ENCODE measurements at regions of chr11 and their contacts with region 1.

Region 1: DNA sequence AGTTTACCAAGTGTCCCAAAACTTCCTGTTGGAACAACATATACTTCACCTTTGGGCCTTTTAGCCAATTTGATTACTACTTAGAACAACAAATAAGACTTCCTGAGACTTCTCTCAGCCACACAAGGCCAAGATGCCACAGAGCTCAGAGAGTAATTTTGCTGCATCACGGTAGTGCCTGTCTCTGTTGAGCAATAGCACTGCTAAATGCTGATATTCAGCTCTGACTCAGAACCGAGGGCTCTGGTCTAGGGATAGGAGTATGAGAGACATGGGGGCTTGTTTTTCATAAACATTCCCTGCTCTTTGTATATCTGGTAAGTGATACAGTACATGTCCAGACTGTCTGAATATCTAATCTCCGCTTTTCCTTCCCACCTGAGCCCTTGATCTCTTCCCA is 260.4 kb upstream of the ARHGAP20 start:
- DNase-seq: no peak
- H3K4me3 ChIP-seq: no peak overlapping the region
- H3K27ac ChIP-seq: no peak overlapping the region
- H3K4me1 ChIP-seq: no peaks in the 10 kb centered on the region
- H3K27me3 ChIP-seq: no peaks in the 10 kb centered on the region
- CTCF ChIP-seq: no peak
- POLR2A ChIP-seq: no peak

Region 2: DNA sequence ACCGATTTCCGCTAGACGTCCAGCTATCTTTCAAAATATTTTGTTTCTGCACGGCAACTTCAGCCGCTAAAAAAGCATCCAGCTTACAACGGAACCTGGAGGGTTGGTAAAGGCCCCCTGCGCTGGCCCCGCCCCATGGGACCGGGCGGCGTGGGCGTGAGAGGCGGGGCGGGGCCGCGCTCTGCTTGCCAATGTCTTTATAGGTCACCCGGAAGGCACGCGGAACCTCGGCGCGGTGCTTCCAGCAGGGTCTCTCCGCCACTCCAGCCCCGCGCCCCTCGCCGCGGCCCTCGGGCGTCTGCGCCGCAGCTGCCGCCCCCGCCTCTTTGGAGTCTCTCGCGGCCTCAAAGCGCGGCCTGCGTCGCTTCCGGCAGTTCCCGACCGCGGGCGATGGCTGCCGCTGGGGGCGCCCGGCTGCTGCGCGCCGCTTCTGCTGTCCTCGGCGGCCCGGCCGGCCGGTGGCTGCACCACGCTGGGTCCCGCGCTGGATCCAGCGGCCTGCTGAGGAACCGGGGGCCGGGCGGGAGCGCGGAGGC is 542.8 kb before region 1 on chr11 and contains the start of gene FDX1:
- CTCF ChIA-PET with region 1: no interaction called
- POLR2A ChIA-PET with region 1: no interaction called
- dilution Hi-C with region 1: no loop called
- intact Hi-C with region 1: no loop called
- DNase-seq: peak; percentile 84
- H3K4me3 ChIP-seq: peak within 1 kb of the TSS; percentile 23 to 75 (median 57)
- H3K27ac ChIP-seq: peak within 1 kb of the TSS; percentile 72
- H3K4me1 ChIP-seq: peaks cover 27% of the 10 kb centered on the region
- H3K27me3 ChIP-seq: no peaks in the 10 kb centered on the region
- CTCF ChIP-seq: peak; percentile 50 to 59
- POLR2A ChIP-seq: no peak
- total RNA-seq, gene FDX1: 9.9 and 11.0 TPM in 2 replicates

Region 3: DNA sequence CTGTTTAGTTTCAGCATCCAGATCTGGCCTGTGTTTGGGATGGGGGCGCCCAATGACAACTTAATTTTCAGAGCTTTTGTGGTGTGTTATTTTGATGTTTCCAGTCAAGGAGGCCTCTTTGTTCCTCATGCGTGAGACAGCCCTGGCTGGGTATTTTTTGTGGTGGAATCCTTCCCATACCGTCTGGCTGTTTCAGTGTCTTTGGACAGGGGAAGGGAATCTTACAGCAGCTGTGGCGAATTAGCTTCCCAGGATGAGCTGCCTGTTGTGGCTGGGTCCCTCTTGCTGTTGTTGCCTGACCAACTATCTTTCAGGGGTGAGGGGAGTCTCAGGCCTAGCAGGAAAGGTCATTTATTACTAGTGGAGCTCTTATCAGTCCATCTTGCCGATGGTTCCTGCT is 399.2 kb before region 1 on chr11:
- CTCF ChIA-PET with region 1: no interaction called
- POLR2A ChIA-PET with region 1: no interaction called
- dilution Hi-C with region 1: no loop called
- intact Hi-C with region 1: loop called (anchors 10 kb)
- DNase-seq: no peak
- H3K4me3 ChIP-seq: no peak overlapping the region
- H3K27ac ChIP-seq: no peak overlapping the region
- H3K4me1 ChIP-seq: no peaks in the 10 kb centered on the region
- H3K27me3 ChIP-seq: no peaks in the 10 kb centered on the region
- CTCF ChIP-seq: no peak
- POLR2A ChIP-seq: no peak